Aorta (tissue), 5 donors: ENCODE measurements at regions of chr6 and their contacts with region 1.

Region 1: GRCh38 chr6:4351520-4352315 is 216.3 kb upstream of the ECI2 start:
- DNase-seq: peak; percentile 89 to 93
- ATAC-seq: peak; percentile 73
- H3K4me3 ChIP-seq: no peak overlapping the region
- H3K27ac ChIP-seq: peak overlapping the region in 1 of 2 donors; percentile 80
- H3K4me1 ChIP-seq: peaks cover 0 to 5% of the 10 kb centered on the region in 2 donors
- H3K27me3 ChIP-seq: no peaks in the 10 kb centered on the region

Region 2: DNA sequence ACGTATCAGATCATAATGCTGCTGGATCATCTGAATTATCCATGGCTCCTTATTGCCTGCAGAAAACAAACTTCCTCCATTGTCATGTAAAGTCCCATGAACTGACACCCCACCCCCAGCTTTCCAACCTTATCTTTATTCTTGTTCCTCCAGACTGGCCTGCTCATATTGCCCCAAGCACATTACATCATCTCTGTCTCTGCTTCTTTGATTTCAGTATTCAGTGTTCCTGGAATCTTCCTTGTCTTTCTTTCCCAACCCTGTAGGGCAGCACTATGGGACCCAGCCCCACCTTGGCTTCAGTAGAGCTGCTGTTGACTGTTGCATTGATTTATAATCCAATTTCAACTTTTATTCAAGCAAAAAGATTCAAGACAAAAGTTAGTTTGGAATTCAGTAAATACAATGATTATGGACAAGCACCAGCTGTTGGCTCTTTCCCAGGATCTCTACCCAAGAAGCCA is 28.8 kb before region 1 on chr6:
- intact Hi-C with region 1: loop called in 1 of 2 experiments (anchors 2 kb)
- DNase-seq: no peak
- ATAC-seq: peak; percentile 60
- H3K4me3 ChIP-seq: no peak overlapping the region
- H3K27ac ChIP-seq: no peak overlapping the region
- H3K4me1 ChIP-seq: peaks cover 0 to 2% of the 10 kb centered on the region in 2 donors
- H3K27me3 ChIP-seq: no peaks in the 10 kb centered on the region

Region 3: GRCh38 chr6:4402439-4402976 is 50.8 kb after region 1 on chr6:
- intact Hi-C with region 1: loop called in 1 of 2 experiments (anchors 5 kb)
- DNase-seq: no peak
- ATAC-seq: peak; percentile 82
- H3K4me3 ChIP-seq: no peak overlapping the region
- H3K27ac ChIP-seq: peak overlapping the region in 1 of 2 donors; percentile 89
- H3K4me1 ChIP-seq: peaks cover 2 to 4% of the 10 kb centered on the region in 2 donors
- H3K27me3 ChIP-seq: no peaks in the 10 kb centered on the region